ENCODE measurements at regions of chr22 and their contacts with region 1.

Region 1: GRCh38 chr22:38114484-38115398 is 4.3 kb upstream of the BAIAP2L2 start:
- DNase-seq: peak; percentile 85
- ATAC-seq: peak; percentile 92
- H3K4me3 Mint-ChIP-seq: no peak overlapping the region
- H3K27ac Mint-ChIP-seq: no peak overlapping the region
- H3K4me1 Mint-ChIP-seq: peaks cover 2% of the 10 kb centered on the region
- H3K27me3 Mint-ChIP-seq: no peaks in the 10 kb centered on the region

Region 2: GRCh38 chr22:38098410-38099249 is 16.1 kb before region 1 on chr22:
- CTCF ChIA-PET with region 1: interaction called, 16 read pairs
- DNase-seq: no peak
- ATAC-seq: no peak
- H3K4me3 Mint-ChIP-seq: no peak overlapping the region
- H3K27ac Mint-ChIP-seq: no peak overlapping the region
- H3K4me1 Mint-ChIP-seq: peaks cover 5% of the 10 kb centered on the region
- H3K27me3 Mint-ChIP-seq: no peaks in the 10 kb centered on the region

Region 3: DNA sequence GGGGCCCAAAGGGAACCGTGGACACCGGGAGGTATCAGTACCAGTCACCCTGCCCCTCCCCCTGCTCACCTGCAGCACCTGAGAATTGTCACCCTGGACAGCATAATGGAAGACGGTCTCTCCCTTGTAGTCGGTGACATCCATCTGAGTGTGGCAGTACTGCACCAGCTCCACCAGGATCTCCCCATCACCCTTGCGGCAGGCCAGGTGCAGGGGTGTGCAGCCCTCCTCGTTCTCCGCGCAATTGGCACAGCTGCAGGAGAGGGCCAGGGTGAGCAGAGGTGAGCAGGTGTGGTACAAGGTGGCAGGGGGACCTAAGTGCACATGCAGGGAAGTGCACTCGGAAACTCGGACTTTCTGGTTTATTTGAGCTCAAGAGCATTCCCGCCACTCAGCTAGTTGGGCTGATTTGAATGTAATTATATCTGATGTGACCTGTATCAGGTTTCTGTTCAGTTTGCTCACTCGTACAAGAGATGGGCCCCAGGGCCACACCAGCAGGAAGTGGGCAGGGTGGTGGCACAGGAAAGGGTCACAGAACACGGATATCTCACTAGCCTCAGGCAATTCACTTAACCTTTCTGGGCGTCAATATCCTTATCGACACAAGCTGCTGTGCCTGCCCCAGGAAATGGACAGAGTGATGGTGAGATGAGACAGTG is 28.4 kb after region 1 on chr22:
- CTCF ChIA-PET with region 1: interaction called, 17 read pairs
- DNase-seq: peak; percentile 84
- ATAC-seq: peak; percentile 84
- H3K4me3 Mint-ChIP-seq: no peak overlapping the region
- H3K27ac Mint-ChIP-seq: peak overlapping the region; percentile 88
- H3K4me1 Mint-ChIP-seq: peaks cover 17% of the 10 kb centered on the region
- H3K27me3 Mint-ChIP-seq: no peaks in the 10 kb centered on the region

Region 4: GRCh38 chr22:38214256-38215056 is 99.7 kb after region 1 on chr22:
- CTCF ChIA-PET with region 1: interaction called, 10 read pairs
- DNase-seq: peak; percentile 78
- ATAC-seq: peak; percentile 90
- H3K4me3 Mint-ChIP-seq: peak overlapping the region; percentile 36
- H3K27ac Mint-ChIP-seq: no peak overlapping the region
- H3K4me1 Mint-ChIP-seq: peaks cover 24% of the 10 kb centered on the region
- H3K27me3 Mint-ChIP-seq: peaks cover 4% of the 10 kb centered on the region

Region 5: GRCh38 chr22:38230108-38230825 is 115.5 kb after region 1 on chr22:
- CTCF ChIA-PET with region 1: interaction called, 27 read pairs
- DNase-seq: peak; percentile 66
- ATAC-seq: peak; percentile 51
- H3K4me3 Mint-ChIP-seq: no peak overlapping the region
- H3K27ac Mint-ChIP-seq: no peak overlapping the region
- H3K4me1 Mint-ChIP-seq: peaks cover 17% of the 10 kb centered on the region
- H3K27me3 Mint-ChIP-seq: no peaks in the 10 kb centered on the region

Measured in activated CD8-positive, alpha-beta memory T cell treated with anti-CD3 and anti-CD28 coated beads, Interleukin-2, amount 10 ng/mL, durations not matched to agents 7 days and 5 days (primary cell).